Activated naive CD4-positive, alpha-beta T cell treated with anti-CD3 and anti-CD28 coated beads for 36 hours (primary cell): ENCODE measurements at regions of chr2 and their contacts with region 1.

Region 1: DNA sequence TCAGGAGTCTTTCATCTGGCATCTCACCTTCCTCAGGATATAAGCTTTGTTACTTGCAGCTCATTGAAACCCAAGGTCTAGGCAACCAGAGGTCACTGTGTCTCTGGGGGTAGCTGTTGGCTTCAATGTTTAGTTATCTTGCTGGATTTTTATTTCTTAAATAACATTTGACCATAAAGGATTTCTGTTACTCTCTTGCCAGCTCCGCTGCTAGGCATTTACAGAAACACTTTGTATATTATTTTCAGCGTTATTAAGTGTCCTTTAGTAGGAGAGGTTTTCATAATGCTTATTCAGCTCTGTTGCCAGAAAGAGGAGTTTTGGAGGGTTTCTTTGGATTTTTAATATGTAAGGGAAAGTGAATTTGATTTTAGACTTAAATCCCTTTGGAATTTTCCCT is 61.4 kb downstream of the QPCT start:
- DNase-seq: no peak
- H3K4me3 Mint-ChIP-seq: no peak overlapping the region
- H3K27ac Mint-ChIP-seq: no peak overlapping the region
- H3K4me1 Mint-ChIP-seq: no peaks in the 10 kb centered on the region
- H3K27me3 Mint-ChIP-seq: peaks cover 2% of the 10 kb centered on the region

Region 2: DNA sequence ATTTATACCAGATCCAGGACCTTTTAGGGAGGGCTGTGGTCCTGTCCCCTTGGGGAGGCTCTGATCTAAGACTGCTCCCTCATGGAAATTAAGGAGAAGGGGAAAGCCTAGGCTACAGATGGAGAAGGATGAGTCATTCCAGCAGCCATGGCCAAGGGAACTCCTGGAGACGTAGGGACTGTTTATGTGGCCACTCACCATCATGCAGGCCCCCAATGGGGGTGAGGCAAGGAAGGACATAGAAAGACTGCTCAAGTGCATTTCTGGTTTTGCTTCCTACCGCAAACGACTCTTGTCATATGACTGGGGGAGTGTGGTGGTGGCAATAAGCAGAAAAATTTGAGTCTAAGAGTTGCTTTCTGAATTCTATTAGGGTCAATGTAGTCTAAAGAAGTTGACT is 724.2 kb after region 1 on chr2:
- CTCF ChIA-PET with region 1: no interaction called
- intact Hi-C with region 1: loop called (anchors 5 kb)
- DNase-seq: no peak
- H3K4me3 Mint-ChIP-seq: no peak overlapping the region
- H3K27ac Mint-ChIP-seq: no peak overlapping the region
- H3K4me1 Mint-ChIP-seq: no peaks in the 10 kb centered on the region
- H3K27me3 Mint-ChIP-seq: no peaks in the 10 kb centered on the region